Activated T-helper 1 cell treated with anti-CD3 and anti-CD28 coated beads, Interleukin-12 subunit alpha, Interleukin-12 subunit beta, Interleukin-2, Interleukin-4 antibody, amounts not matched to agents 30 ng/mL and 10 ng/mL and 1 ng/mL, durations not matched to agents 14 hours and 24 hours and 36 hours (primary cell): ENCODE measurements at regions of chr19 and their contacts with region 1.

Region 1: GRCh38 chr19:51158474-51159129 is 16.5 kb downstream of the SIGLEC7 start:
- DNase-seq: peak; percentile 60
- H3K4me3 Mint-ChIP-seq: no peak overlapping the region
- H3K27ac Mint-ChIP-seq: peak overlapping the region; percentile 41
- H3K4me1 Mint-ChIP-seq: peaks cover 9% of the 10 kb centered on the region
- H3K27me3 Mint-ChIP-seq: peaks cover 5% of the 10 kb centered on the region

Region 2: GRCh38 chr19:50815439-50815838 is 343.2 kb before region 1 on chr19:
- intact Hi-C with region 1: no loop called
- DNase-seq: no peak
- H3K4me3 Mint-ChIP-seq: no peak overlapping the region
- H3K27ac Mint-ChIP-seq: no peak overlapping the region
- H3K4me1 Mint-ChIP-seq: peaks cover 32% of the 10 kb centered on the region
- H3K27me3 Mint-ChIP-seq: peaks cover 26% of the 10 kb centered on the region

Region 3: DNA sequence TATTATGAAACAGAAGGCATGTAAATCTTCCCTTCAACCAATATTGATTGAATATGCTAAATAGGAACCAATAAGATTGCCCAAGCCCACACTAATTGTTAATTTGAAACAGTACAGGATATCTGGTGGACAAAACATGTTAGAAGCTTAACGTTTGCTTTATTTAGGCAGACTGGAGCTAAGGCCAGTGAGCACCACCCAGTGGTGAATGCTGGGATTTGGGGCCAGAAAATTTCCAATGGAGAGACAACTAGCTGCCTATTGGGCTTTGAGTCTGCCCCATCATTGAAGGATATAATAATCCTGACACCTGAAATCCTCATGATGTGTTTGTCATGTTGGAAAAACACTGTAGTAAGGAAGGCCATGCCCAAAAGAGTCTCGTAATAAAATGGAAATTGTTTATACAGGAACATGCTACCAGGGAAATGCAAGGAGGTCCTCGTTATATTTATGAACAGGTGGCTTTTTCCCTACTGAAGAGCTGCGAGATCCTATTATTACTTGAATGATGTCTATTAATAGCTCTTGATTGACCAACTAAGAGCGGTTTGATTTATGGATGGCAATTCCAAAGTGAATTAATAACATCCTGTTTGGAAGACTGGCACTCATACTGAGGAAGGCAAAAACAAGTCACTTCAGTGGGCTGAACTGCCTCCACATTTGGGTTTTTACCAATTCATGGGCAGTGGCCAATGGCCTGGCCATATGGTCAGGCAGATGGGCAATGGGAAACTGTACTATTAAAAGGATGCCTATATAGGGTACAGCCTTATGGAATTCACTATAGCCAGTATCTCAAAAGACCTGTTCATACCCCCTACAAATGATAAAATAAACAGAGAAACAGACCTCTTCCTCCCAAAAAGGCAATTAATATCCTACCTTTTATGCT is 101.0 kb after region 1 on chr19:
- intact Hi-C with region 1: loop called (anchors 1 kb)
- DNase-seq: peak; percentile 31
- H3K4me3 Mint-ChIP-seq: no peak overlapping the region
- H3K27ac Mint-ChIP-seq: no peak overlapping the region
- H3K4me1 Mint-ChIP-seq: peaks cover 41% of the 10 kb centered on the region
- H3K27me3 Mint-ChIP-seq: peaks cover 6% of the 10 kb centered on the region

Region 4: DNA sequence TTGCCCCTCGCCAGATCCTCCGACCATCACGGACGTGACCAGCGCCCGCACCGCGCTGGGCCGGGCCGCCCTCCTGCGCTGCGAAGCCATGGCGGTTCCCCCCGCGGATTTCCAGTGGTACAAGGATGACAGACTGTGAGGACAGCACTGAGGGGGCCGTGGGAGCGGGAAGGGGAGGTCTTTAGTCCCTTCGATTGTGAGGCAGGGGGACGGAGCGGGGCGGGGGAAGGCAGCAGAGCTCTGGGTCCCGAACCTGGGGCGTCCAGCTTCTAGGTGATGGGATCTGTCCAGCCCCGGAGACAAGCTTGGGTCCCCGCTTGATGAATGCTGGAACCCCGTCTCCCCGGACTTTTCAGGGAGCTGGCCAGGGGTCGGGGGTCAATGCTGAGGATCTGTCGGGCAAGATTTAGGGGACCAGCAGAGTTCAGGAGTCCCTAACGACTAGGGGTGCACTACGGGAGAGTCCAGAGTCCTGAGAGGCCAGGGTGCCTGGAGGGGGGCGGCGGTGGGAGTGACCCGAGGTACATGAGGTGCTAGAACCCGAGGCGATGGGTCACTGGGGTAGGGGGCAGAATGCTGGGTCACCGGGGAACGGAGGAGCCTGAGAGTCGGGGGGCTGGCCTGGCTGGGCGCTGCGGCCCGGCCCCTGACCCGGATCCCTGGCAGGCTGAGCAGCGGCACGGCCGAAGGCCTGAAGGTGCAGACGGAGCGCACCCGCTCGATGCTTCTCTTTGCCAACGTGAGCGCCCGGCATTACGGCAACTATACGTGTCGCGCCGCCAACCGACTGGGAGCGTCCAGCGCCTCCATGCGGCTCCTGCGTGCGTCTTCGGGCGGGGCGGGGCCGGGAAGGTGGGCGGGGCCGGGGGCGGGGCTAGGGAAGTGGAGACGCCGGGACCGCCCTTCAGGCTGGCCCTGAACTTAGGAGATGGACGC is 168.7 kb after region 1 on chr19:
- intact Hi-C with region 1: loop called (anchors 2 kb)
- DNase-seq: peak; percentile 49
- H3K4me3 Mint-ChIP-seq: peak overlapping the region; percentile 79
- H3K27ac Mint-ChIP-seq: peak overlapping the region; percentile 63
- H3K4me1 Mint-ChIP-seq: peaks cover 12% of the 10 kb centered on the region
- H3K27me3 Mint-ChIP-seq: peaks cover 24% of the 10 kb centered on the region